ENCODE measurements at regions of chr12 and their contacts with region 1.

Region 1: DNA sequence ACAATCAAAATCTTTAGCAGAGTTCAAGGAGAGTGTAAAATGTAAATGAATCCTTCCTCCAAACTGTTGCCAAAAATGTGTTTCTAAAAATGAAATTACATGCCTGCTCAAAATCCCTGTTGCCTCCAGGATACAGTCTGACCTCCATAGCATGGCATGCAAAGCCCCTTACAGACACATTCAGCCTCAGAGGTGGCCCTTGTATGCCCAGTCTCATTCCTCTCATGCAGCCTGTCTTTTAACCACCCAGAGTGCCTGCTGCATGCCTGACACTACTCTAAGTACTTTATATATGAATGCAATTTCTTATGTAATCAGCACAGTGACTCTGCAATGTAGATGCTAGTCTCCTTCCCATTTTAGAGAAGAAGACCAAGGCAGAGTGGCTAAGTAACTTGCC is 24.4 kb upstream of the PTPRQ start:
- DNase-seq: no peak
- ATAC-seq: no peak
- H3K4me3 ChIP-seq: no peak overlapping the region
- H3K27ac ChIP-seq: no peak overlapping the region
- H3K4me1 ChIP-seq: peaks cover 11 to 13% of the 10 kb centered on the region in 2 donors
- H3K27me3 ChIP-seq: no peaks in the 10 kb centered on the region
- CTCF ChIP-seq: no peak
- POLR2A ChIP-seq: no peak

Region 2: GRCh38 chr12:80756875-80757274 is 337.2 kb after region 1 on chr12:
- in situ Hi-C with region 1: loop called (anchors 5 to 25 kb)
- intact Hi-C with region 1: no loop called
- DNase-seq: no peak
- ATAC-seq: peak; percentile 68 to 80
- H3K4me3 ChIP-seq: no peak overlapping the region
- H3K27ac ChIP-seq: no peak overlapping the region
- H3K4me1 ChIP-seq: no peaks in the 10 kb centered on the region
- H3K27me3 ChIP-seq: no peaks in the 10 kb centered on the region
- CTCF ChIP-seq: no peak
- POLR2A ChIP-seq: no peak

Measured in gastrocnemius medialis (tissue), 4 donors.